ENCODE measurements at regions of chr3 and their contacts with region 1.

Region 1: GRCh38 chr3:38136777-38137614 is at the start of gene ACAA1:
- DNase-seq: peak; percentile 99
- H3K4me3 Mint-ChIP-seq: peak within 1 kb of the TSS; percentile 90
- H3K27ac Mint-ChIP-seq: peak within 1 kb of the TSS; percentile 99
- H3K4me1 Mint-ChIP-seq: peaks cover 64% of the 10 kb centered on the region
- H3K27me3 Mint-ChIP-seq: no peaks in the 10 kb centered on the region
- total RNA-seq, gene ACAA1: 68.7 and 71.6 TPM in 2 replicates

Region 2: DNA sequence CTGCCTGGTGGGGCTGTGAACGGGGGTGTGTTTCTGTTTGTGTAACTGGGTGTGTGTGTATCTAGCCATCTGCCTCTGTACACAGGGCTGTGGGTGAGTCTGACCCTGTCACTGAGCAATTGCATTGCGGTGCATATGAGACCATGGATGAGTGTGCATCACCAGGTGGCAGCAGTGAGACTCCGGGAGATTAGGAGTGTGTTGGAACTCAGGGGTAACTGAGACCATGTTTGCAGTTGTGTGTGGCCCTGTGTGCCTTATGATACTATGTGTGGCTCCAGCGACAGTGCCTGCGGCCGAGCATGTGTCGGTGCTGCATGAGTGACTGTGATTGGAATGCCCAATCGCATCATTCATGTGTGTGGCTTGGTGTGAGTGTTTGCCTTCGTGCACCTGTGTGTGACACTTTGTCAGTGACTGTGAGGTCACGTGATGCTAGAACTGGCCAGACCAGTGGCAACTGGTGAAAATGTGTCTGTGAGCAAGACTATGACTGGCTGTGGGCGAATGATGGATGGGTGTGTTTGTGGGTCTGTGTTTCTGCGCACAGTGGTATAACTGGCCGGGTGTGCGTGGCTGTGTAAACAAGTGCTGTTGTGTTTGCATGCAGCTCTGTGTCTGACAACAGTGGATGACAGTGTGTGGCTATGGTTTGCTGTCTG is 132.4 kb before region 1 on chr3:
- intact Hi-C with region 1: no loop called
- DNase-seq: peak; percentile 87
- H3K4me3 Mint-ChIP-seq: no peak overlapping the region
- H3K27ac Mint-ChIP-seq: no peak overlapping the region
- H3K4me1 Mint-ChIP-seq: peaks cover 15% of the 10 kb centered on the region
- H3K27me3 Mint-ChIP-seq: no peaks in the 10 kb centered on the region

Region 3: GRCh38 chr3:38151667-38152275 is 14.8 kb after region 1 on chr3:
- intact Hi-C with region 1: loop called (anchors 2 kb)
- DNase-seq: peak; percentile 65
- H3K4me3 Mint-ChIP-seq: peak overlapping the region; percentile 17
- H3K27ac Mint-ChIP-seq: peak overlapping the region; percentile 65
- H3K4me1 Mint-ChIP-seq: peaks cover 39% of the 10 kb centered on the region
- H3K27me3 Mint-ChIP-seq: no peaks in the 10 kb centered on the region

Region 4: DNA sequence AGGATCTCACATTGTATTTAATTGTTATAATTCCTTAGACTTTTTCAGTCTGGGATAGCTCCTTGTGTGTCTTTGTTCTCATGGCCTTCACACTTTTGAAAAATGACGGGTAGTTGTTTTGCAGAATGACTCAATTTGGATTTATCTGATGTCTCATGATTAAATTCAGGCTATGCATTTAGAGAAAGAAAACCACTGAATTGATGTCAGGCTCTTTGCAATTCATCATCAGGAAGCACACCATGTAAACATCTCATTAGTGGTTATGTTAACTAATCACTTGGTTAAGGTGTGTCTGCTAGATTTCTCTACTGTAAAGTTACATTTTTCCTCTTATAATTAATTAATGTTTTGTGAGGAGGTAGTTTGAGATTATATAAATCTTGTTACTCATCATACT is 120.6 kb after region 1 on chr3:
- intact Hi-C with region 1: loop called (anchors 2 kb)
- DNase-seq: no peak
- H3K4me3 Mint-ChIP-seq: no peak overlapping the region
- H3K27ac Mint-ChIP-seq: no peak overlapping the region
- H3K4me1 Mint-ChIP-seq: peaks cover 25% of the 10 kb centered on the region
- H3K27me3 Mint-ChIP-seq: no peaks in the 10 kb centered on the region

Region 5: GRCh38 chr3:38453075-38453912 is 316.3 kb after region 1 on chr3 and contains the start of gene ACVR2B:
- intact Hi-C with region 1: loop called (anchors 2 kb)
- DNase-seq: peak; percentile 93
- H3K4me3 Mint-ChIP-seq: peak within 1 kb of the TSS; percentile 99
- H3K27ac Mint-ChIP-seq: peak within 1 kb of the TSS; percentile 92
- H3K4me1 Mint-ChIP-seq: peaks cover 19% of the 10 kb centered on the region
- H3K27me3 Mint-ChIP-seq: peaks cover 24% of the 10 kb centered on the region
- total RNA-seq, gene ACVR2B: 12.2 and 12.6 TPM in 2 replicates